Endothelial cell of umbilical vein (primary cell): ENCODE measurements at regions of chr9 and their contacts with region 1.

Region 1: GRCh38 chr9:13427587-13427986 is 148.1 kb upstream of the MPDZ start:
- DNase-seq: peak; percentile 78
- H3K4me3 ChIP-seq: no peak overlapping the region
- H3K27ac ChIP-seq: peak overlapping the region; percentile 34
- H3K4me1 ChIP-seq: peaks cover 6% of the 10 kb centered on the region
- H3K27me3 ChIP-seq: no peaks in the 10 kb centered on the region
- CTCF ChIP-seq: peak; percentile 40 to 43
- POLR2A ChIP-seq: no peak

Region 2: GRCh38 chr9:13213337-13213736 is 214.2 kb before region 1 on chr9:
- CTCF ChIA-PET with region 1: interaction called, 5 read pairs
- POLR2A ChIA-PET with region 1: no interaction called
- dilution Hi-C with region 1: no loop called
- intact Hi-C with region 1: loop called (anchors 1 kb)
- DNase-seq: peak; percentile 44
- H3K4me3 ChIP-seq: no peak overlapping the region
- H3K27ac ChIP-seq: no peak overlapping the region
- H3K4me1 ChIP-seq: peaks cover 27% of the 10 kb centered on the region
- H3K27me3 ChIP-seq: no peaks in the 10 kb centered on the region
- CTCF ChIP-seq: peak in 1 of 2 donors; percentile 22
- POLR2A ChIP-seq: no peak

Region 3: DNA sequence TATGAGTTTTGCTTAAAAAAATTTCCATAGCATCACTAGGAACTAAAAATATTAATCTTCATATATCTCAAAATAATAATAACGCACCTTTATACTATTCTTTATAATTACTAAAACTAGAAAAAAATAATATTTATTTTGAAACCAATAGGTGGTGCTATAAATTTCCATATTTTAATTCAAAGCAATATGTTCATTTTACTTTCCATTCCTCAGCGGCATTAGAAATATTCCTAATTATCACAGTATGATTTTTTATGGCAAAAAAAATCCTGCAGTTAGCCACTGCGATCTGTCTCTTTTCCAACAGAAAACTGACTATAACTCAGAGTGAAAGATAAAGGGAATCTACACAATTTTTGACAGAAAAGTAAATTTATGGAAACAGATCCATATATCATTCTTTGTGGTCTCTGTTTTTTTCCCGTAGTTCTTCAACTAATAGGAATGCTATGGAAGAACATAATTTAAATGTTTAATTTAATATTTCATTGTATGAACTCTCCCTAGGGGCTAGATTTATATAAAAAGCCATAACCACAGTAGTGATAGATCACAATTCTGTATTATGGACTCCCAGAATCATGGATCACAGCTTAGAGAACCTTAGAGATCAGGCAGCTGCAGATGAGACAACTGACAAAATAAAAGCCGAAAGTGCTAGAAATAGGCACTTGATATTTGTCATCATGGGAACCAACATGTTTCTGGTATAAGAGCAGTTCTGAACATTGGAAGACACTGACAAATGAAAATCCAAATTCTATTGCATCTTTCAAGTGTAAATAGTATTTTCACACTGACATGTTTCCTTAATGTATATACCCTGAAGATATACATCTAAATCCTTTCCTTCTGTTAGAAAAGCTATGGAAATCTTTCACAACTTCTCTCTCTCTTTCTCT is 19.6 kb after region 1 on chr9:
- CTCF ChIA-PET with region 1: interaction called, 32 read pairs
- POLR2A ChIA-PET with region 1: no interaction called
- dilution Hi-C with region 1: no loop called
- intact Hi-C with region 1: no loop called
- DNase-seq: peak; percentile 63
- H3K4me3 ChIP-seq: peak overlapping the region in 1 of 3 experiments; percentile 18
- H3K27ac ChIP-seq: no peak overlapping the region
- H3K4me1 ChIP-seq: peaks cover 14% of the 10 kb centered on the region
- H3K27me3 ChIP-seq: no peaks in the 10 kb centered on the region
- CTCF ChIP-seq: no peak
- POLR2A ChIP-seq: no peak

Region 4: GRCh38 chr9:13500034-13500433 is 72.4 kb after region 1 on chr9:
- CTCF ChIA-PET with region 1: no interaction called
- POLR2A ChIA-PET with region 1: no interaction called
- dilution Hi-C with region 1: no loop called
- intact Hi-C with region 1: no loop called
- DNase-seq: no peak
- H3K4me3 ChIP-seq: no peak overlapping the region
- H3K27ac ChIP-seq: no peak overlapping the region
- H3K4me1 ChIP-seq: no peaks in the 10 kb centered on the region
- H3K27me3 ChIP-seq: no peaks in the 10 kb centered on the region
- CTCF ChIP-seq: no peak
- POLR2A ChIP-seq: no peak

Region 5: DNA sequence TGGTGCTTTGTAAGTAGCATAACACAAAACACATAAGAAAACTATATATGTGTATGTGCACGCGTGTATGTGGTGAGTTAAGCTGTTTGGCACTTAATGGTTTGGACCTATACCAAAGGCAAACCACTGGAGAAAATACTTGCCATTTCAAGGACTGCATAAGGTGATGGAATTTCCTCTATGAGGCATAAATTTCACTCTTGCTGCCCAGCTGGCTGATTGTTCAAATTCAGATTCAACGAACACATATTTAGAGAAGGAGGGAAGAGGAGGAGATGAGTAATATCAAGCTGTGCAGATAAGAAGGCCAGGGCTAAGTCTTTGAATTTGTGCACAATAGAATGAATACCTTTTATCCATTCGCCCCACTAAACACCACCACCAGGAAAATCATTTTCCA is 322.5 kb after region 1 on chr9:
- CTCF ChIA-PET with region 1: interaction called, 6 read pairs
- POLR2A ChIA-PET with region 1: no interaction called
- dilution Hi-C with region 1: no loop called
- intact Hi-C with region 1: loop called (anchors 2 kb)
- DNase-seq: peak; percentile 96
- H3K4me3 ChIP-seq: no peak overlapping the region
- H3K27ac ChIP-seq: peak overlapping the region; percentile 72
- H3K4me1 ChIP-seq: peaks cover 17% of the 10 kb centered on the region
- H3K27me3 ChIP-seq: no peaks in the 10 kb centered on the region
- CTCF ChIP-seq: no peak
- POLR2A ChIP-seq: peak; percentile 49

Region 6: DNA sequence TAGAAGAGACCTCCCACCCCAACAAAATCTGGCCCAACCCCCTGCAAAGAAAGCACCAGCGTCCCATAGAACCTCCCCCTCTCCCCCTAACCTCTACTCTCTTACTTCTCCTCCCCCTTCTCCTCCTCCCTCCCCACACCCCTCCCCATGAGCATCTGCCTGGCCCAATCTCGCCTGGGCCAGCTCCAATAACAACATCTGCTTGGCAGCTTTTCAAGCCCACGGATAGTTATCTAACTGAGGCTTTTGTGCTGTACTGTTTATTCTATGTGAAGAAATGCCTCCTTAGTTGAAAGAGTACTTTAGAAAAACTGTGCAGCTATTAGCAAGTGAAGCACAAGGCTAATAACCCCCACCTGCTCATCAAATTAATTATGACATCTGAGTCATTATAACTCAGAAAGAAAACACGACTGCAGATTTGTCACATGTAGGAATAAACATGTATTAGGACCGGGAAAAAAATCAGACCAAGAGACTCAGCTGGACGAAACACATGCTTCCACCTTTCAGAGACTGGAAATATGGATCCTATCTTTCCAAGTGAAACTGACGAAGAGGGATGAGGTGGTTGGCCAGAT is 843.6 kb after region 1 on chr9:
- CTCF ChIA-PET with region 1: interaction called, 11 read pairs
- POLR2A ChIA-PET with region 1: no interaction called
- dilution Hi-C with region 1: no loop called
- intact Hi-C with region 1: no loop called
- DNase-seq: peak; percentile 95
- H3K4me3 ChIP-seq: peak overlapping the region in 1 of 3 experiments; percentile 33
- H3K27ac ChIP-seq: peak overlapping the region; percentile 46
- H3K4me1 ChIP-seq: peaks cover 64% of the 10 kb centered on the region
- H3K27me3 ChIP-seq: no peaks in the 10 kb centered on the region
- CTCF ChIP-seq: no peak
- POLR2A ChIP-seq: no peak

Region 7: DNA sequence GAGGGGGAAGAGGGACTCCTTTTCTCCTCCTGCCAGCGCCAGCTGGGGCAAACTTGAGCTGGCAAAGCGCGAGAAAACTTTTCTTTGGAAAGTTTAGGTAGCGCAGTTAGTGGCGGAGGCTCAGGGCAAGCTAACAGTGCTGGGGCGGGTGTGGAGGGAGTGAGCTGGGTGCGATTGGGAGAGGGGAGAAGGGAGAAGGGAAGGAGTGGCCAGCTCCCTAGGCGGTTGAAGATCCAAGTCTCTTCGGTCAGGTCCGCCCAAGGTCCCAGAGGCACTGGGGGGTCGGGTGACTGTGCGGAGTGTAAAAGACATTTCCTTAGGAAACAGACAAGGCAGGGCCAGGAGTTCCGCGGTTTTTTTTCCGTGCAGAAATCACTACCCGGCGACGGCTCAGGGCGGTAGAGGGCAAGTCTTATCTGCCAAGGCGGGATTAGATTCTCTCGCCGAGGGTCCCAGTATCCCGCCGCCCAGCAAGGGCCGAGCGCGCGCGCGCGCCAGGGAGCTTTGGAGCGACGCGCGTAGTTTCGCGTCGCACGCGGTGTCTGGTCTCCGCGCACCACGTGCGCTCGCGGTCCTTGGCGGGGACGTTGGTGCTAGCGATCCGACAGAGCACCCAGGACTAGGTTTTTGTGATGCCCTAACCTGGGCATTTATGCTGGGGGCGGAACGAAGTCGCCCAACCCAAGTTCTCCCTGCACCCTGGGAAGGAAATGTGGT is 920.0 kb after region 1 on chr9:
- CTCF ChIA-PET with region 1: interaction called, 60 read pairs
- POLR2A ChIA-PET with region 1: no interaction called
- dilution Hi-C with region 1: no loop called
- intact Hi-C with region 1: loop called (anchors 1 kb)
- DNase-seq: peak; percentile 60
- H3K4me3 ChIP-seq: peak overlapping the region; percentile 17 to 57 (median 48)
- H3K27ac ChIP-seq: peak overlapping the region; percentile 32
- H3K4me1 ChIP-seq: peaks cover 57% of the 10 kb centered on the region
- H3K27me3 ChIP-seq: no peaks in the 10 kb centered on the region
- CTCF ChIP-seq: no peak
- POLR2A ChIP-seq: peak; percentile 31

Region 8: GRCh38 chr9:14428781-14429230 is 1001.2 kb after region 1 on chr9:
- CTCF ChIA-PET with region 1: interaction called, 33 read pairs
- POLR2A ChIA-PET with region 1: no interaction called
- dilution Hi-C with region 1: no loop called
- intact Hi-C with region 1: loop called (anchors 1 kb)
- DNase-seq: peak; percentile 68
- H3K4me3 ChIP-seq: no peak overlapping the region
- H3K27ac ChIP-seq: no peak overlapping the region
- H3K4me1 ChIP-seq: peaks cover 15% of the 10 kb centered on the region
- H3K27me3 ChIP-seq: no peaks in the 10 kb centered on the region
- CTCF ChIP-seq: peak; percentile 79 to 84
- POLR2A ChIP-seq: no peak